Naive thymus-derived CD4-positive, alpha-beta T cell (primary cell): ENCODE measurements at regions of chr5 and their contacts with region 1.

Region 1: GRCh38 chr5:59126708-59127573 is 544.1 kb downstream of the RAB3C start:
- DNase-seq: peak in 1 of 9 donors; percentile 17
- ATAC-seq: peak; percentile 9
- H3K4me3 ChIP-seq: peak overlapping the region; percentile 46
- H3K4me3 Mint-ChIP-seq: no peak overlapping the region
- H3K27ac ChIP-seq: peak overlapping the region; percentile 84
- H3K27ac Mint-ChIP-seq: no peak overlapping the region
- H3K4me1 ChIP-seq: peaks cover 58 to 59% of the 10 kb centered on the region in 2 donors
- H3K4me1 Mint-ChIP-seq: peaks cover 0 to 20% (median 7%) of the 10 kb centered on the region in 7 donors
- H3K27me3 ChIP-seq: no peaks in the 10 kb centered on the region
- H3K27me3 Mint-ChIP-seq: no peaks in the 10 kb centered on the region

Region 2: DNA sequence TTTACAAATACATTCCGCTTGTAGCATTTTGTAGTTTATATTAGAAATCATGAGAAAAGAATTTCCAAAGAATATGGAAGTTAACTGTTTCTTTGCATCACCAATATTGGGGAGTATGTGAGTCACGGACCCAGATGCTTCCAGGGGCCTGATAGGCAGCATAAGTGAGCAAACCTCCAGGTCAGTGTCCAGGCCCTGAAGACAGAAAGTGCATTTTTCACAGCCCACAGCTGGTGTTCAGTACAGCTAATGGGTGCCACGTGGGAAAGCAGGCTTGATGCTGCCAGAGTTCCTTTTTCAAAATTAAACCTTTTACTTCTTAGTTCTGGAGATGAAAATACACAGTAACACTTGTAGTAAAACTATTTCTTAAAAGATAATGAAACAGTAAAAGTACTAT is 1189.9 kb before region 1 on chr5:
- CTCF ChIA-PET with region 1: no interaction called
- POLR2A ChIA-PET with region 1: no interaction called
- intact Hi-C with region 1: no loop called
- DNase-seq: no peak
- ATAC-seq: no peak
- H3K4me3 ChIP-seq: no peak overlapping the region
- H3K4me3 Mint-ChIP-seq: no peak overlapping the region
- H3K27ac ChIP-seq: no peak overlapping the region
- H3K27ac Mint-ChIP-seq: no peak overlapping the region
- H3K4me1 ChIP-seq: no peaks in the 10 kb centered on the region
- H3K4me1 Mint-ChIP-seq: no peaks in the 10 kb centered on the region
- H3K27me3 ChIP-seq: no peaks in the 10 kb centered on the region
- H3K27me3 Mint-ChIP-seq: peaks cover 0 to 22% (median 17%) of the 10 kb centered on the region in 5 donors

Region 3: GRCh38 chr5:59099270-59099994 is 27.5 kb before region 1 on chr5:
- CTCF ChIA-PET with region 1: no interaction called
- POLR2A ChIA-PET with region 1: interaction called, 3 read pairs
- intact Hi-C with region 1: loop called (anchors 1 kb)
- DNase-seq: peak in 2 of 9 donors; percentile 2 to 39
- ATAC-seq: peak; percentile 90
- H3K4me3 ChIP-seq: no peak overlapping the region
- H3K4me3 Mint-ChIP-seq: peak overlapping the region in 4 of 10 donors; percentile 1 to 66 (median 4)
- H3K27ac ChIP-seq: no peak overlapping the region
- H3K27ac Mint-ChIP-seq: peak overlapping the region in 8 of 9 donors; percentile 0 to 87 (median 22)
- H3K4me1 ChIP-seq: peaks cover 10 to 14% of the 10 kb centered on the region in 2 donors
- H3K4me1 Mint-ChIP-seq: peaks cover 11 to 80% (median 22%) of the 10 kb centered on the region in 7 donors
- H3K27me3 ChIP-seq: no peaks in the 10 kb centered on the region
- H3K27me3 Mint-ChIP-seq: no peaks in the 10 kb centered on the region

Region 4: GRCh38 chr5:59143926-59144333 is 17.0 kb after region 1 on chr5:
- CTCF ChIA-PET with region 1: interaction called, 3 read pairs
- POLR2A ChIA-PET with region 1: interaction called, 13 read pairs
- intact Hi-C with region 1: loop called in 1 of 2 experiments (anchors 2 kb)
- DNase-seq: no peak
- ATAC-seq: no peak
- H3K4me3 ChIP-seq: no peak overlapping the region
- H3K4me3 Mint-ChIP-seq: no peak overlapping the region
- H3K27ac ChIP-seq: no peak overlapping the region
- H3K27ac Mint-ChIP-seq: no peak overlapping the region
- H3K4me1 ChIP-seq: no peaks in the 10 kb centered on the region
- H3K4me1 Mint-ChIP-seq: peaks cover 0 to 40% (median 0%) of the 10 kb centered on the region in 7 donors
- H3K27me3 ChIP-seq: no peaks in the 10 kb centered on the region
- H3K27me3 Mint-ChIP-seq: peaks cover 0 to 4% (median 0%) of the 10 kb centered on the region in 5 donors

Region 5: GRCh38 chr5:59161221-59162105 is 34.5 kb after region 1 on chr5:
- CTCF ChIA-PET with region 1: interaction called, 4 read pairs
- POLR2A ChIA-PET with region 1: interaction called, 3 read pairs
- intact Hi-C with region 1: loop called in 1 of 2 experiments (anchors 1 kb)
- DNase-seq: peak in 7 of 9 donors; percentile 40 to 75 (median 62)
- ATAC-seq: peak; percentile 91
- H3K4me3 ChIP-seq: no peak overlapping the region
- H3K4me3 Mint-ChIP-seq: peak overlapping the region; percentile 6 to 64 (median 38)
- H3K27ac ChIP-seq: peak overlapping the region; percentile 12
- H3K27ac Mint-ChIP-seq: peak overlapping the region; percentile 51 to 92 (median 79)
- H3K4me1 ChIP-seq: peaks cover 0 to 12% of the 10 kb centered on the region in 2 donors
- H3K4me1 Mint-ChIP-seq: peaks cover 4 to 22% (median 18%) of the 10 kb centered on the region in 7 donors
- H3K27me3 ChIP-seq: no peaks in the 10 kb centered on the region
- H3K27me3 Mint-ChIP-seq: peaks cover 0 to 2% (median 0%) of the 10 kb centered on the region in 5 donors